ENCODE measurements at regions of chr1 and their contacts with region 1.

Region 1: GRCh38 chr1:245156081-245156735 is 1.4 kb downstream of the KIF26B start:
- DNase-seq: peak; percentile 36 to 82 (median 58)
- ATAC-seq: peak; percentile 88
- H3K4me3 ChIP-seq: peak overlapping the region; percentile 46
- H3K4me3 Mint-ChIP-seq: peak overlapping the region; percentile 79
- H3K27ac ChIP-seq: no peak overlapping the region
- H3K27ac Mint-ChIP-seq: no peak overlapping the region
- H3K4me1 ChIP-seq: peaks cover 37% of the 10 kb centered on the region
- H3K4me1 Mint-ChIP-seq: peaks cover 29% of the 10 kb centered on the region
- H3K27me3 ChIP-seq: peaks cover 36 to 62% of the 10 kb centered on the region in 2 experiments
- H3K27me3 Mint-ChIP-seq: peaks cover 74% of the 10 kb centered on the region
- CTCF ChIP-seq: peak; percentile 23

Region 2: DNA sequence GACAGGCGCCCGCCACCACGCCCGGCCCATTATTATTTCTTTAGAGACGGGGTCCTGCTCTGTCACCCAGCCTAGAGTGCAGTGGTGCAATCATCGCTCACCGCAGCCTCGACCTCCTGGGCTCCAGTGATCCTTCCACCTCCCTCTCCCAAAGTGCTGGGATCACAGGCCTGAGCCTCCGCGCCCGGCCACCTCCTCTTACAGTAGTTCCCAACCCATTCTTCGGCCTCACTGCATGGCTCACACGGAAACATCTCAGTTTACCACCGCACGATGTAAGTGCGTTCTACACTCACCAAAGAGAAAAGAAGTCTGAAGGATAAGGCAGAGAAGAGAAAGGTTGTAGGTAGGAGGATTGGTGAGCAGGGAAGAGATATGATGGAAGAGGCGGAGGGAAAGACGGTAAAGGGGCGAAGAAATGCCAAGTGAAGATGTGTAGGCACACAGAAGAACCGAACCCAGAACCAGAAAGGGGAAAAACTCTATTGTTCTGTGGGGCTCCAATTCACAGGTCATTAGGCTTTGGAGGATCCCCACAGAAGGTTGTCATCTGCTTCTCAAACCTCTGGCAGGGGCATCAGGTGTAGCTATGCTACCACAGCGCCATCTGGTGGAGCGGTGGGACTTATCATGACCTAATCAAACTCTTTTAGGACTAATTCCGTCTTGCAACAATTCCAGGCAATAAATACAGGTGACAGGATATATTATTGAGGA is 846.7 kb after region 1 on chr1:
- CTCF ChIA-PET with region 1: interaction called, 12 read pairs
- POLR2A ChIA-PET with region 1: no interaction called
- intact Hi-C with region 1: loop called (anchors 1 kb)
- DNase-seq: peak; percentile 70 to 90 (median 80)
- ATAC-seq: peak; percentile 63
- H3K4me3 ChIP-seq: no peak overlapping the region
- H3K4me3 Mint-ChIP-seq: no peak overlapping the region
- H3K27ac ChIP-seq: no peak overlapping the region
- H3K27ac Mint-ChIP-seq: no peak overlapping the region
- H3K4me1 ChIP-seq: no peaks in the 10 kb centered on the region
- H3K4me1 Mint-ChIP-seq: no peaks in the 10 kb centered on the region
- H3K27me3 ChIP-seq: no peaks in the 10 kb centered on the region
- H3K27me3 Mint-ChIP-seq: no peaks in the 10 kb centered on the region
- CTCF ChIP-seq: peak; percentile 95

Region 3: GRCh38 chr1:246117066-246117791 is 961.0 kb after region 1 on chr1:
- CTCF ChIA-PET with region 1: no interaction called
- POLR2A ChIA-PET with region 1: no interaction called
- intact Hi-C with region 1: loop called in 1 of 2 experiments (anchors 10 kb)
- DNase-seq: peak; percentile 9 to 78 (median 30)
- ATAC-seq: peak; percentile 93
- H3K4me3 ChIP-seq: no peak overlapping the region
- H3K4me3 Mint-ChIP-seq: peak overlapping the region; percentile 64
- H3K27ac ChIP-seq: peak overlapping the region in 1 of 2 donors; percentile 34
- H3K27ac Mint-ChIP-seq: peak overlapping the region; percentile 88
- H3K4me1 ChIP-seq: no peaks in the 10 kb centered on the region
- H3K4me1 Mint-ChIP-seq: peaks cover 45% of the 10 kb centered on the region
- H3K27me3 ChIP-seq: no peaks in the 10 kb centered on the region
- H3K27me3 Mint-ChIP-seq: no peaks in the 10 kb centered on the region
- CTCF ChIP-seq: peak; percentile 67

Region 4: DNA sequence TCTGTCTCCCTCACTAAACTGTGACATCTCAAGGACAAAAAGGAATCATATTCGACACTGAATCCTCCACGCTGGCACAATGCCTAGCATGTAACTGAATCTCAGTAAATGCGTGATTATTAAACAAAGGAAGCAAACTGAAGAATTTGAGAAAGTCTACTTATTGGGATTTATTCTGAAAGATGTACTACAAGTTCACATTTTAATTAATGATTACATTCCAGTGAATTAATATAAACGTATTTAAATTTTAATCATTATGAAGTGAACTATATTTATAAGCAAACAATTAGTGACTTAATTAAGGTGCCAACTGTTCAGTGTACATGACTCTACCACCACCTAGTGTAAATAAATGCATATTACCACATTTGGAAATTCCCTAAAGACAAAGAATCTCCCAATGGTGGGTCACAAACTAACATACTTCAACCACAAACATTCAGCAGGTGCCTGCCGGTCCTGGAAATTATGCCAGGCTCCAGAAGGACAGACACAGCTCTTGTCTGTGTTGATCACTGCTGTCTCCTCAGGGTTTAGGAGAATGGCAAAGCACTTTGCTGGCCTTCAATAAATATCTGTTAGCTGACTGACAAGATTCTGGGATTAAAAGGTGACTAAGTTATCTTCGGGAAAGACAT is 1294.5 kb after region 1 on chr1:
- CTCF ChIA-PET with region 1: interaction called, 3 read pairs
- POLR2A ChIA-PET with region 1: no interaction called
- intact Hi-C with region 1: loop called in 1 of 2 experiments (anchors 10 kb)
- DNase-seq: peak in 3 of 14 experiments; percentile 16 to 24 (median 19)
- ATAC-seq: no peak
- H3K4me3 ChIP-seq: no peak overlapping the region
- H3K4me3 Mint-ChIP-seq: no peak overlapping the region
- H3K27ac ChIP-seq: no peak overlapping the region
- H3K27ac Mint-ChIP-seq: no peak overlapping the region
- H3K4me1 ChIP-seq: no peaks in the 10 kb centered on the region
- H3K4me1 Mint-ChIP-seq: peaks cover 5% of the 10 kb centered on the region
- H3K27me3 ChIP-seq: no peaks in the 10 kb centered on the region
- H3K27me3 Mint-ChIP-seq: no peaks in the 10 kb centered on the region
- CTCF ChIP-seq: peak; percentile 35

Region 5: GRCh38 chr1:246497331-246497915 is 1341.2 kb after region 1 on chr1:
- CTCF ChIA-PET with region 1: no interaction called
- POLR2A ChIA-PET with region 1: no interaction called
- intact Hi-C with region 1: loop called in 1 of 2 experiments (anchors 5 kb)
- DNase-seq: peak in 4 of 14 experiments; percentile 31 to 84 (median 81)
- ATAC-seq: peak; percentile 78
- H3K4me3 ChIP-seq: no peak overlapping the region
- H3K4me3 Mint-ChIP-seq: no peak overlapping the region
- H3K27ac ChIP-seq: no peak overlapping the region
- H3K27ac Mint-ChIP-seq: no peak overlapping the region
- H3K4me1 ChIP-seq: no peaks in the 10 kb centered on the region
- H3K4me1 Mint-ChIP-seq: peaks cover 17% of the 10 kb centered on the region
- H3K27me3 ChIP-seq: no peaks in the 10 kb centered on the region
- H3K27me3 Mint-ChIP-seq: no peaks in the 10 kb centered on the region
- CTCF ChIP-seq: peak; percentile 75

Region 6: GRCh38 chr1:246699095-246699735 is 1543.0 kb after region 1 on chr1:
- CTCF ChIA-PET with region 1: no interaction called
- POLR2A ChIA-PET with region 1: no interaction called
- intact Hi-C with region 1: loop called in 1 of 2 experiments (anchors 10 kb)
- DNase-seq: peak; percentile 58 to 90 (median 70)
- ATAC-seq: peak; percentile 89
- H3K4me3 ChIP-seq: peak overlapping the region; percentile 19
- H3K4me3 Mint-ChIP-seq: peak overlapping the region; percentile 70
- H3K27ac ChIP-seq: no peak overlapping the region
- H3K27ac Mint-ChIP-seq: no peak overlapping the region
- H3K4me1 ChIP-seq: peaks cover 17% of the 10 kb centered on the region
- H3K4me1 Mint-ChIP-seq: peaks cover 6% of the 10 kb centered on the region
- H3K27me3 ChIP-seq: no peaks in the 10 kb centered on the region
- H3K27me3 Mint-ChIP-seq: peaks cover 4% of the 10 kb centered on the region
- CTCF ChIP-seq: peak; percentile 80

Region 7: GRCh38 chr1:246753670-246754535 is 1597.7 kb after region 1 on chr1:
- CTCF ChIA-PET with region 1: no interaction called
- POLR2A ChIA-PET with region 1: no interaction called
- intact Hi-C with region 1: loop called (anchors 5 kb)
- DNase-seq: peak; percentile 26 to 74 (median 40)
- ATAC-seq: peak; percentile 71
- H3K4me3 ChIP-seq: no peak overlapping the region
- H3K4me3 Mint-ChIP-seq: no peak overlapping the region
- H3K27ac ChIP-seq: no peak overlapping the region
- H3K27ac Mint-ChIP-seq: no peak overlapping the region
- H3K4me1 ChIP-seq: no peaks in the 10 kb centered on the region
- H3K4me1 Mint-ChIP-seq: no peaks in the 10 kb centered on the region
- H3K27me3 ChIP-seq: no peaks in the 10 kb centered on the region
- H3K27me3 Mint-ChIP-seq: no peaks in the 10 kb centered on the region
- CTCF ChIP-seq: peak; percentile 64